ENCODE measurements at regions of chr18 and their contacts with region 1.

Region 1: DNA sequence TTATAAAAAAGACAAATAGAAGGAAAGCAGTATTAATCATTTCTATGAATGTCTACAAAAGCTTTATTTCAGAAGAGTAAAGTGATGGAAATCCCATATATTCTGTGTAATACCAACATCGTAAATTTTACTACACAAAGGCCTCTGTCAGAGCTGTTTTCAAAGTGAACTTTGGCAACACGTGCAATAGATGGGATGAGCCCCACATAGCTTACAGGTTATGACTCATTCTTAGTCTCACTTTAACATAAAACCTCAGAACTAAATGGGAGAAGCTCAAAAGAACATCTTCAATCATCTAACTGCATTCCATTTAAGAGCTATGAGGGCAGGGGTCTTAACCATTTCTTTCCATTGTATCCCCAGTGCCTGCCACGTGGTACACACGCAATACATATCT is 11.5 kb downstream of the VPS4B start:
- DNase-seq: no peak
- H3K4me3 Mint-ChIP-seq: no peak overlapping the region
- H3K27ac Mint-ChIP-seq: peak overlapping the region; percentile 61
- H3K4me1 Mint-ChIP-seq: peaks cover 45% of the 10 kb centered on the region
- H3K27me3 Mint-ChIP-seq: no peaks in the 10 kb centered on the region

Region 2: DNA sequence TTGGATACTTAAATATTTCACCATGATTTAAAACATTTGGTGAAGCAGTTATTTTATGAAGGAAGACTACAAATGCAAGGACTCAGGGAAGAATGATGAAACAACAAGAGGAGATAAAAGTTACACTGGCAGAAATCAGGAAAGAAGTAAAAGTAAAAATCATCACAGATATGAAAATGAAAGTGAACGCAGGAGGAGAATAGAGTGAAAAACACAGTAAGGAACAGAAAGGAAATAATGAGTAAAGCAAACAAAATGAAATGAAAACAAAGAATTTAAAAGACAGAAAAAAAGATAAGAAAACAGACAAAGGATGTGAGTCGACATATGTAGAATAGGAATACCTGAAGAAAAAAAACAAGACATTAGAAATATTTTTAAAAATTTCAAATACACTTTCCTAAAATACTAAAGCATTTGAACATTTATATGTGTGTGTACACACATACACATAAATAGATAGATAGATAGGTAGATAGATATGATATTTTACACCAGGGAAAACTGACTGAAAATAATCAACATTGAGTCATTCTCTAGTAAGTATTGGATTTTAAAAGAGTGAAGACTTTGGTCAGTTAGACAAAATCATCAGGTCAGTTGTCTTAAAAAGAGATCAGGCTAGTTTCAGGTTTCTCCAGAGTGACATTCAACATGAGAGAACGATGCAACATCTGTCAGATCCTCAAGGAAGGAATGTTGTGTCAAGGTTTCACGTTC is 31.7 kb before region 1 on chr18:
- CTCF ChIA-PET with region 1: no interaction called
- intact Hi-C with region 1: loop called (anchors 2 kb)
- DNase-seq: no peak
- H3K4me3 Mint-ChIP-seq: peak overlapping the region; percentile 49
- H3K27ac Mint-ChIP-seq: peak overlapping the region; percentile 64
- H3K4me1 Mint-ChIP-seq: peaks cover 17% of the 10 kb centered on the region
- H3K27me3 Mint-ChIP-seq: no peaks in the 10 kb centered on the region

Region 3: GRCh38 chr18:63495675-63496074 is 84.9 kb after region 1 on chr18:
- CTCF ChIA-PET with region 1: no interaction called
- intact Hi-C with region 1: no loop called
- DNase-seq: no peak
- H3K4me3 Mint-ChIP-seq: no peak overlapping the region
- H3K27ac Mint-ChIP-seq: no peak overlapping the region
- H3K4me1 Mint-ChIP-seq: no peaks in the 10 kb centered on the region
- H3K27me3 Mint-ChIP-seq: peaks cover 3% of the 10 kb centered on the region

Measured in activated naive CD4-positive, alpha-beta T cell treated with anti-CD3 and anti-CD28 coated beads for 36 hours (primary cell).